Activated CD8-positive, alpha-beta T cell treated with anti-CD3 and anti-CD28 coated beads for 36 hours (primary cell): ENCODE measurements at regions of chr17 and their contacts with region 1.

Region 1: GRCh38 chr17:57481910-57482391 is 225.6 kb downstream of the MSI2 start:
- DNase-seq: no peak
- ATAC-seq: no peak
- H3K4me3 Mint-ChIP-seq: no peak overlapping the region
- H3K27ac Mint-ChIP-seq: no peak overlapping the region
- H3K4me1 Mint-ChIP-seq: peaks cover 59% of the 10 kb centered on the region
- H3K27me3 Mint-ChIP-seq: no peaks in the 10 kb centered on the region
- CTCF ChIP-seq: no peak

Region 2: DNA sequence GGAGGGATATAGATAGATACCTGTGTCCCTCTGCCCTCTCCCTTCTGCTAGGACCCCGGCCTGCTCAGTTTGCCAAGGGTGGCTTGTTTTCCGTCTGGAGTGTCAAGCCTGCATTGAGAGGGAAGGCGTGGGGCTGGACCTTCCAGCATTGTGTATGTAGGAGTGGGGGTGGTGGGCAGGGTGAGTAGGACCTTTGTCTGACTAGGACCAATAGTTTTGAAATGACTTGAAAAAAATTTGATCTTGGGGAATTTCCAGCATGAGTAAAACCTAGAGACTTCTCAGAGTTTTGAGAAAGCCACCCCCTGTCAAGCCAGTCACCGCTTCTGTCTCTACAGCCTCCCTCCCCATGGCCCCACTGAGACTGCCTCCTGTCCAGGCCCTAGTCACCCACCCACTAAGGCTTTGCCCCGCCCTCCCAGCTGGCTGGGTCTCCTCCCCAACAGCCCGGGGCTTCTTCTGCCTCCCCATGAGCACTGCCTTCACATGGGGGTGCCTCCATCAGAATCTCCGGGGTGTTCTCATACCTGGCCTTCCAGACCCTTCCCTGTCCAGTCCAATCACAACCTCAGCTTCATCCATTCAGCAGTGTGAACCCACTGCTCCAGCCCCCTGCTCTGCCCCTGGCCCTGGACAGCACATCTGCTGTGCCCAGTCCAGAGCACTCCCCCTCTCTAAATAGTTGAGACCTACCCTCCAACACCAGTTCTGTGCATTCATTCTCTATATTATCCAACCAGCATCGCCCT is 18.7 kb before region 1 on chr17:
- CTCF ChIA-PET with region 1: no interaction called
- POLR2A ChIA-PET with region 1: no interaction called
- intact Hi-C with region 1: loop called (anchors 1 kb)
- DNase-seq: peak; percentile 95
- ATAC-seq: peak; percentile 95
- H3K4me3 Mint-ChIP-seq: peak overlapping the region; percentile 25
- H3K27ac Mint-ChIP-seq: peak overlapping the region; percentile 82
- H3K4me1 Mint-ChIP-seq: peaks cover 71% of the 10 kb centered on the region
- H3K27me3 Mint-ChIP-seq: no peaks in the 10 kb centered on the region
- CTCF ChIP-seq: no peak

Region 3: DNA sequence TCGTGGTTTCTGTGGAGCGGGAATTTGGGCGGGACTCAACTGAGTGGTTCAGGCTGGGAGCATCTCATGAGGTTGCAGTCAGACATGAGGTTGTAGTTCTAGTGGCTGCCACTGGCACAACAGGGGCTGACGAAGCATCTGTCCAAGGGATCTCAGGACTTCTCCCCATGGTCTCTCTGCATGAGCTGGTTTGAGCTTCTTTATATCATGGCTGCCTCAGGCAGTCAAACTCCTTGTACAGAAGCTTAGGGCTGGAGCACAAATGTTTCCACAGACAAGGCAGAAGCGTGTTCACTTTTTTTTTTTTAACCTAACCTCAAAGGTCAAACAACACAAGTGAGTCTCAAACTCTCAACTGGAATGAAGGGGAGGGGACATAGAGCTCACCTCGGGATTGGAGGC is 17.7 kb after region 1 on chr17:
- CTCF ChIA-PET with region 1: interaction called, 16 read pairs
- POLR2A ChIA-PET with region 1: interaction called, 6 read pairs
- intact Hi-C with region 1: no loop called
- DNase-seq: peak; percentile 10
- ATAC-seq: peak; percentile 68
- H3K4me3 Mint-ChIP-seq: no peak overlapping the region
- H3K27ac Mint-ChIP-seq: peak overlapping the region; percentile 51
- H3K4me1 Mint-ChIP-seq: peaks cover 53% of the 10 kb centered on the region
- H3K27me3 Mint-ChIP-seq: no peaks in the 10 kb centered on the region
- CTCF ChIP-seq: no peak